Activated CD8-positive, alpha-beta T cell treated with anti-CD3 and anti-CD28 coated beads, Interleukin-2, amount 10 ng/mL, durations not matched to agents 7 days and 5 days (primary cell): ENCODE measurements at regions of chr20 and their contacts with region 1.

Region 1: DNA sequence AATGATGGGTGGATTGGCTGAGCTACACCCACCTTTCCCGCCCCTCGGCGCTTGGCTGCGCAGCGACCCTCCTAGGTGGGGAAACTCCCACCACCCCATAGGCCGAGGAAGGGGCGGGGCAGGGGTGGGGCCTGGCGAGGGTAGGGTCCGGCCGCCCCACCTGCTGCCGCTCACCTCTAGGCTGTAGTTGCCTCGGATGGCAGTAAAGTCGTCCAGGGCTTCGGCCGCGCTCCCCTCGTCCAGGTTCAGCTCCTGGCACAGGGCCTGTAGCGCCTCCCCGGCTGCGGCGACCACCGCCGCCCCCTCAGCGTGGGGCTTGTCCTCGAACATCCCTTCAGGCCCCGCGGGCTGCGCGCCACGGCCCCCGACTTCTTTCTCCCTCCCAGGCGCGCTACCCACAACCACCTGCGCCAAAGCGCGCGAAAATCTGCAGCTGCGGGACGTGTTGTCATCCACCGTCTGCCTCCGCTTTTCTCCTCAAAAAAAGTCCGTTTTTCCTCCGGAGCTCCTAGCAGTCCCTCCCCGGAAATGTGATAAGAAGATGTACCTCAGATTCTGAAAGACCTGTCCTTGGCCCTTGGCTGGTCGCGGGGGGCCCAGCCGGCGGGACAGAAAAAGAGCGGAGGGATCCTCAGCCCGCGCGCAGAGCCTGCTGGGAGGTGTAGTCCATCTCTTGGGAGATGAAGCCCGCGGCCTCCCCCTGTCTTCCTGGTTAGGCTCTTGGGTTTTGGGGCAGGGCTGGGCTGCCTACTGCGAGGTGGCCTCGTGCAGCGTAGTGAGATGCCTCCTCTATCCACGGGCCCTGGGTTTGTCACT is at the start of gene RBL1:
- DNase-seq: peak; percentile 92
- ATAC-seq: peak; percentile 87
- H3K4me3 Mint-ChIP-seq: peak within 1 kb of the TSS; percentile 99
- H3K27ac Mint-ChIP-seq: peak within 1 kb of the TSS; percentile 100
- H3K4me1 Mint-ChIP-seq: peaks cover 44% of the 10 kb centered on the region
- H3K27me3 Mint-ChIP-seq: no peaks in the 10 kb centered on the region
- total RNA-seq, gene RBL1: 55.6 to 56.3 TPM

Region 2: DNA sequence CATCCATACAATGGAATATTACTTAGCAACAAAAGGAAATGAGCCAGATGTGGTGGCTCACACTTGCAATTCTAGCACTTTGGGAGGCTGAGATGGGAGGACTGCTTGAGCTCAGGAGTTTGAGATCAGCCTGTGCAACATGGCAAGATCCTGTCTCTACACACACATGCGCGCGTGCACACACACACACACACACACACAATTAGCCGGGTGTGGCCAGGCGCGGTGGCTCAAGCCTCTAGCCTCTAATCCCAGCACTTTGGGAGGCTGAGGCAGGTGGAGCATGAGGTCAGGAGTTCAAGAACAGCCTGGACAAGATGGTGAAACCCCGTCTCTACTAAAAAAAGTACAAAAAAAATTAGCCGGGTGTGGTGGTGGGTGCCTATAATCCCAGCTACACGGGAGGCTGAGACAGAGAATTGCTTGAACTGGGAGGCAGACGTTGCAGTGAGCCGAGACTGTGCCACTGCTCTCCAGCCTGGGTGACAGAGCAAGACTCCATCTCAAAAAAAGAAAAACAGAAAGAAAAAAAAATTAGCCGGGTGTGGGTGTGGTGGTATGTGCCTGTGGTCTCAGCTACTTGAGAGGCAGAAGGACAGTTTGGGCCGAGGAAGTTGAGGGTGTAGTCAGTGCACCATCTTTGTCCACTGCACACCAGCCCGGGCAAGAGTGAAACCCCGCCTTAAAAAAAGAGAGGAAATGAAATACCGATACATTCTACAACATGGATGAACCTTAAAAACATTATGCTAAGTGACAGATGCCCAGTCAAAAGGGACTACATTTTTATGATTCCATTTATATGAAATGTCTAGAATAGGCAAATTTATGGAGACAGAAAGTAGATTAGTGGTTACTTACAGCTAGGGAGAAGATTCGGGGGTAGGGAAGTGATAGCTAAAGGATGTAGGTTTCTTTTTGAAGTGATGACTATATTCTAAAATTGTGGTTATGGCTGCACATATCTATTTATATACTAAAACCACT is 52.5 kb before region 1 on chr20:
- CTCF ChIA-PET with region 1: no interaction called
- POLR2A ChIA-PET with region 1: interaction called, 19 read pairs
- DNase-seq: peak; percentile 80
- ATAC-seq: peak; percentile 83
- H3K4me3 Mint-ChIP-seq: peak overlapping the region; percentile 82
- H3K27ac Mint-ChIP-seq: peak overlapping the region; percentile 100
- H3K4me1 Mint-ChIP-seq: peaks cover 49% of the 10 kb centered on the region
- H3K27me3 Mint-ChIP-seq: no peaks in the 10 kb centered on the region

Region 3: DNA sequence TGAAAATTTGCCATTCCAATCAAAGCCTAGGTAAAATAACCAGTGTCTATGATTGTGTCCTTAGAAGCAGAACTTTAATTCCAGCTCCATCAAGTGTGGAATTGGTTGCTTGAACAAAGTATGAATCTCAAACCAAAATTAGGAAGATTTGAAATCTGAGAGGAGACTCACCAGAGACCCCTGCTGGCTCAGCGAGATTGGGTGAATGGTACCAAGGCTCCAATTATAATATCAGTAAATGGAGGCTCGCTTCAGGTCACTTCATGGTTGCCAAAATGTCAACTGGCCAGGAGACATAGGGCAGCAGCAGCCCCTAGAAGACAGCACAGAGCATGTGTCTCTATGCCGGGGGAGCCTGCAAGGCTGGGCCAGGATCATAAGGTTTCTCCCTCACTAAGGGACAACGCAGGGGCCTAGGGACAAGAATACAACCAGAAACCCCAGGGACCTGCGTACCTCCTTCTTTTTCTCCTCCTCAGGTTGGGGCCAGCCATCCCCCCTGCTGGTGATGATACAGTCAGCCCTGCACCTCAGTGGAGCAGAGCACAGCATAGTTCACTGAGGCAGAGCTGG is 14.0 kb before region 1 on chr20:
- CTCF ChIA-PET with region 1: interaction called, 6 read pairs
- POLR2A ChIA-PET with region 1: interaction called, 12 read pairs
- DNase-seq: peak; percentile 46
- ATAC-seq: peak; percentile 43
- H3K4me3 Mint-ChIP-seq: no peak overlapping the region
- H3K27ac Mint-ChIP-seq: no peak overlapping the region
- H3K4me1 Mint-ChIP-seq: peaks cover 27% of the 10 kb centered on the region
- H3K27me3 Mint-ChIP-seq: no peaks in the 10 kb centered on the region

Region 4: GRCh38 chr20:37178839-37179670 is 83.2 kb after region 1 on chr20 and contains the starts of genes MROH8 and RPN2:
- CTCF ChIA-PET with region 1: interaction called, 8 read pairs
- POLR2A ChIA-PET with region 1: interaction called, 35 read pairs
- DNase-seq: peak; percentile 97
- ATAC-seq: peak; percentile 98
- H3K4me3 Mint-ChIP-seq: peak within 1 kb of the TSS; percentile 95
- H3K27ac Mint-ChIP-seq: peak within 1 kb of the TSS; percentile 97
- H3K4me1 Mint-ChIP-seq: peaks cover 36% of the 10 kb centered on the region
- H3K27me3 Mint-ChIP-seq: no peaks in the 10 kb centered on the region
- total RNA-seq, gene MROH8: 2.6 to 2.8 TPM
- total RNA-seq, gene RPN2: 163 to 165 TPM